ENCODE measurements at regions of chr7 and their contacts with region 1.

Region 1: GRCh38 chr7:92833024-92833765 is 3.2 kb downstream of the CDK6 start:
- DNase-seq: peak; percentile 80 to 92
- H3K4me3 ChIP-seq: peak overlapping the region; percentile 84 to 94
- H3K27ac ChIP-seq: peak overlapping the region; percentile 88 to 92
- H3K4me1 ChIP-seq: peaks cover 0 to 36% (median 13%) of the 10 kb centered on the region in 4 donors
- H3K27me3 ChIP-seq: no peaks in the 10 kb centered on the region
- CTCF ChIP-seq: peak; percentile 77 to 90

Region 2: GRCh38 chr7:92528188-92528957 is 304.8 kb before region 1 on chr7 and contains the starts of genes PEX1 and RBM48:
- intact Hi-C with region 1: loop called (anchors 10 kb)
- DNase-seq: peak; percentile 95 to 99
- H3K4me3 ChIP-seq: peak within 1 kb of the TSS; percentile 85 to 97
- H3K27ac ChIP-seq: peak within 1 kb of the TSS; percentile 83 to 91
- H3K4me1 ChIP-seq: peaks cover 0 to 27% (median 12%) of the 10 kb centered on the region in 4 donors
- H3K27me3 ChIP-seq: no peaks in the 10 kb centered on the region
- CTCF ChIP-seq: peak; percentile 15 to 30

Region 3: DNA sequence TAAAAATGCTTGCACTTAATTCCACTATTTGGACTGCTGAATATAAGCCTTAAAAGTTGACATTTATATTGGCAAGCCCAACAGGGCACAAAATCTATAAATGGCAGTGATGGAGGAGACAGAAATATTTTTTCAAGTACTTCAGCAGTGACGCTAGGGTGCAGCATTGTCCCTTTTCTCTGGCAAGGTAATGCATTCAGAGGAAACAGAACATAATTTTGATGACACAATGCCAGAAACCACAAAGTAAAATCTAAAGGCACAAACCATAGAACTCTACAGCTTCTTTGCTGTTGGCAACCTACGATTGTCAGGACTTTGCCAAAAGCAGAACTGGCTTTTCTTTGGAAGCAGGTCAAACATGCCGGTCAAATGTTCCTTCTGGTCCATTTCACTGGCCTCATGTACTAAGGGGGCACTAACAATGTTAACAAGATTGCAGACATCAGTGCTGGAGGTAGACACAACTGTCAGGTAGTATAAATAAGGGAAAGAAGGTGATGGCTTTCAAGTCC is 212.1 kb before region 1 on chr7:
- intact Hi-C with region 1: loop called (anchors 5 kb)
- DNase-seq: peak; percentile 30 to 76
- H3K4me3 ChIP-seq: no peak overlapping the region
- H3K27ac ChIP-seq: peak overlapping the region; percentile 51 to 67
- H3K4me1 ChIP-seq: peaks cover 0 to 20% (median 13%) of the 10 kb centered on the region in 4 donors
- H3K27me3 ChIP-seq: no peaks in the 10 kb centered on the region
- CTCF ChIP-seq: peak; percentile 76 to 82

Region 4: DNA sequence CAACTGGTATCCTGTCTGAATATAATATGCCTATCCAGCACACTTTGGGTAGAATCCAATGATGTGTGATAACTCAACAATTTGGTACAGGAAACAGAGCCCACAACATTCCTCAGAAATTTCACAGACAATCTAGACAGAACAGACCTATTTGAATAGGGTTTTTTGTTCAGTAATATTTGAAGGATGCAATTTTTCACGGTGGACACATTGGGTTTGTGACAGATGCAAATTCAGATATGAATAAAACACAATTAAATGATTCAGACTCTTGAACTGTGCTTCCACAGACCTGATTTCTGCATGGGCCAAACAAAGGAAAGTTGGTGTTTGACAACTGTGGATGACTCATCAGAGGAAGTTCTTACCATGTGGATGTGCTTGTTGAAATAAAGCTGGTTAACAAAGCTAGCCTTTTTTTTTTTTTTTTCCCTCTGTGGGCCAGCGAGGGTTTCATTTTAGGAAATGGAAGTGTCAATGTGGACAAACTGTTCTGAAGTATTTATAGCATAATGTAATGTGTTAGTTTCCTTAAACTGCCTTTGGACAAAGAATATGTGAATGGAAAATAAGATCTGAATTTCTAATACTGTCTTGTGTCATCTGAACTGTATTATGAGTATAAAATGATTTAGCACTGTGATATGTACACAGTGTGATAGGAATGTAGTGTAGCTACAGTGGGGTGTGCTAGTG is 199.8 kb before region 1 on chr7:
- intact Hi-C with region 1: loop called (anchors 5 kb)
- DNase-seq: peak in 1 of 2 donors; percentile 28
- H3K4me3 ChIP-seq: no peak overlapping the region
- H3K27ac ChIP-seq: peak overlapping the region in 1 of 2 donors; percentile 38
- H3K4me1 ChIP-seq: peaks cover 0 to 53% (median 27%) of the 10 kb centered on the region in 4 donors
- H3K27me3 ChIP-seq: no peaks in the 10 kb centered on the region
- CTCF ChIP-seq: no peak

Region 5: DNA sequence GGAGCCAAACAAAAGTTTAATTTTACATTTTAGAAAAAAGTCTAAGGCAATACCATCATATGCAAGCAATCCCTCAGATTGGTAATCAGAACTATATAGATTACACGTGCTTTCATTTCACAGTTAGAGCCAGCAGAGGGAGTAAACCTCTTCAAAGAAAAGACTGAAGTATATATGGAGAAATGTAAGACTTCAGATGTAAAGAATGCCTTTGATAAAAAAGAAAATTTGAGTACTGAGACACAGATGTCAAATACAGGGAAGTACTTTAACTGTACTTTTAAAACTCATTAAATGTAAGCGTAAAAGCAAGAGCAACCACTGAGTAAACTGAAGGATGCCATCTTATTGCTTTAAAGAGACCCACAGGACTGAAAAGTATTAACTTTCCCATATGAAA is 141.6 kb before region 1 on chr7:
- intact Hi-C with region 1: loop called (anchors 5 kb)
- DNase-seq: no peak
- H3K4me3 ChIP-seq: no peak overlapping the region
- H3K27ac ChIP-seq: no peak overlapping the region
- H3K4me1 ChIP-seq: peaks cover 0 to 14% (median 0%) of the 10 kb centered on the region in 4 donors
- H3K27me3 ChIP-seq: no peaks in the 10 kb centered on the region
- CTCF ChIP-seq: peak; percentile 41 to 54

Region 6: GRCh38 chr7:93055543-93056107 is 222.4 kb after region 1 on chr7:
- intact Hi-C with region 1: loop called (anchors 5 kb)
- DNase-seq: no peak
- H3K4me3 ChIP-seq: no peak overlapping the region
- H3K27ac ChIP-seq: no peak overlapping the region
- H3K4me1 ChIP-seq: no peaks in the 10 kb centered on the region
- H3K27me3 ChIP-seq: peaks cover 0 to under 1% of the 10 kb centered on the region in 2 donors
- CTCF ChIP-seq: peak; percentile 74 to 77